ENCODE measurements at regions of chr19 and their contacts with region 1.

Region 1: DNA sequence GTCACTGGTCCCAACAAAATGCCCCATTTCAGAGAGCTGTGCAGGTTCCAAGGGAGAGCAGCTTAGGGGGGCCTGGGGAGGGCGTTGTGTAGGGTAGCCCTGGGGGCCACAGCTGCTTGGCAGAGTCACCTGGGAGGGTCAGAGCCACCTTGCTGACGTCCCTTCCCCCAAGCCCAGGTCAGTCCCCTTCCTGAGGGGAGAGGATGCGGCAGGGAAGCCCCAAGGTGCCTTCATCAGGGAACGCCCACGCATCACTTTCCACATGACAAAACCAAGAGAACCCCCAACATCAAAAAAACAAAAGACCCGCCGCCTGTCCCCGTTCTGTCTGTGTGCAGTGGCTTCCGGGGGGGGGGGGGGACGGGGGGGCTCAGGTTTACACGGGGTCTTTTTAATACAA is 5.3 kb upstream of the UQCR11 start:
- DNase-seq: no peak
- H3K4me3 ChIP-seq: no peak overlapping the region
- H3K27ac ChIP-seq: no peak overlapping the region
- H3K4me1 ChIP-seq: peaks cover 7 to 18% (median 9%) of the 10 kb centered on the region in 4 donors
- H3K27me3 ChIP-seq: no peaks in the 10 kb centered on the region
- CTCF ChIP-seq: no peak
- EP300 ChIP-seq: no peak
- POLR2A ChIP-seq: no peak

Region 2: DNA sequence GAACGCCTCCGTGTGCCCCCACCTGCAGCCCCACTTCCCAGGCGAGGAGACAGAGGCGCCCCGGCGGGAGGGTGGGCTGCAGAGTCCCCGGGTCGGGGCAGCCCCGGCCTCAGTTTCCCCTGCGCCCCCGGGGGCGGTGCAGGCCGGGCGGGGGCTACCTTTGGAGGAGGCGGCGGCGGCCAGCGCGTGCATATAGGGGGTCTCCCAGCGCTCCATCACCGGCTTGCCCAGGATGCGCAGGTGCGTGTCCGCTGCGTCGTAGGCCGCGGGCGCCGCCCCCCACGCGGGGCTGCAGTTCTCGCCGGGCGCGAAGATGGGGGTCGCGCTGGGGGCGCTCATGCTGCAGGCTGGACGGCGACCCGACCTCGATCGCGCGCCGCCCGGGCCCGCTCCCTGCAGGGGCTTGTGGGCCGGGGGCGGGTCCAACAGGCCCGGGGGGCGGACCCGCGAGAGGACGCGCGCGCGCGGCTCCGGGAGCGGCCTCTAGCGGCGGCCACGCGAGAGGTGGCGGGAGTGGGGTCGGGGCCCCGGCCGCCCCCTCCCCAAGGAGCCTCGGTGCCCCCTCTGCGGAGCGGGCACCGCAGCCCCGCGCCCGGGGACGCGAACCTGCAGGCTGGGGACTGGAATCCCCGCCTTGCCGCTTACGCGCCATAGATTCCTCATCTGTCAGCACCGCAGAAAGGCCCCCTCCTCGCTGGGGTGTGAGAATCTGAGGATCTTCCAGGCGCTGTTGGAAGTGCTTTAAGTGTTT is 209.3 kb before region 1 on chr19 and contains the start of gene GAMT:
- intact Hi-C with region 1: no loop called
- DNase-seq: peak in 1 of 2 donors; percentile 84
- H3K4me3 ChIP-seq: peak within 1 kb of the TSS; percentile 60 to 88 (median 64)
- H3K27ac ChIP-seq: peak within 1 kb of the TSS in 4 of 5 donors; percentile 53 to 61 (median 57)
- H3K4me1 ChIP-seq: peaks cover 26 to 56% (median 53%) of the 10 kb centered on the region in 4 donors
- H3K27me3 ChIP-seq: peaks cover 0 to 20% (median 0%) of the 10 kb centered on the region in 3 donors
- CTCF ChIP-seq: peak in 5 of 7 experiments; percentile 3 to 60 (median 32)
- EP300 ChIP-seq: no peak
- POLR2A ChIP-seq: no peak
- total RNA-seq, gene GAMT: 2.6 to 15.6 (median 4.5) TPM in 3 of 5 donors, not detected in the others

Region 3: DNA sequence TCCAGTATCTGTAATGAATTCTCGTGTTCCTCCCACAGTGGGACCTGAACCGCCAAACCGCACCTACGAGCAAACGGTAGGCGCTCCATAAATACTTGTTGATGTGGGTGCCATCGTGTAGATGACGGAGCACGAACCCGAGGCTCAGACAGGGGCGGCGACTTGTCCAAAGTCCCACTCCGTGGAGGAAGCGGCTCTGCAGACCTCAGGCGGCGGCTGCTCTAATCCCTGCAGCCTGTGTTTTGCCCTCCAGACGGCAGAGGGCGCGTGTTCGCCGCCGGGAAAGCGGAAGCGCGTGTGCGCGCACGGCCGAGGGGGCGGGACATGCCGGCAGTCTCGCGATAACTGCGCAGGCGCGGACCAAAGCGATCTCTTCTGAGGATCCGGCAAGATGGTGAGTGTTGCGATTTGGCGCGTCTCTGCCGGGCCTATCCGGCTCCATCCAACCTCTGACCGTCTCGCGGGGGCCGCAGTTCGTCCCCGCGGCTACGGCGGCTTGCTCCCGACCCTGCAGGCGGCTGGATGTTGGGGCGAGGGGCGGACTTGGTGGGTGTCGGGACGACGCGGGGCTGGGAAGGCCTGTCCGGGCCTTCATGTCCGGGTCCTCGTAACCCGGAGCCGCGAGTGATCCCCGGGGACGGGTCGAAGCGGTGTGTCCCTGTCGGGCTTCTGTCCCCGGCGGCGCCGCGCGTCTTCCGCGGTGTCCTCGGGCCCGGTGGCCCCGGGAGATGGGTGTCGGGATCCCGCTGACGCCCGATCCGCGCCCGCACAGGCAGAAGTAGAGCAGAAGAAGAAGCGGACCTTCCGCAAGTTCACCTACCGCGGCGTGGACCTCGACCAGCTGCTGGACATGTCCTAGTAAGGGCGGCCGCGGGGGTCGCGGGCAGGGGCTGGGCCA is 172.3 kb before region 1 on chr19 and contains the start of gene RPS15:
- intact Hi-C with region 1: no loop called
- DNase-seq: peak; percentile 96 to 99
- H3K4me3 ChIP-seq: peak within 1 kb of the TSS; percentile 84 to 95 (median 87)
- H3K27ac ChIP-seq: peak within 1 kb of the TSS; percentile 86 to 92 (median 90)
- H3K4me1 ChIP-seq: peaks cover 18 to 37% (median 25%) of the 10 kb centered on the region in 4 donors
- H3K27me3 ChIP-seq: no peaks in the 10 kb centered on the region
- CTCF ChIP-seq: peak in 5 of 7 experiments; percentile 82 to 96 (median 93)
- EP300 ChIP-seq: no peak
- POLR2A ChIP-seq: peak in 2 of 4 donors; percentile 58 to 82
- total RNA-seq, gene RPS15: 428 to 2,471 (median 1,694) TPM

Region 4: DNA sequence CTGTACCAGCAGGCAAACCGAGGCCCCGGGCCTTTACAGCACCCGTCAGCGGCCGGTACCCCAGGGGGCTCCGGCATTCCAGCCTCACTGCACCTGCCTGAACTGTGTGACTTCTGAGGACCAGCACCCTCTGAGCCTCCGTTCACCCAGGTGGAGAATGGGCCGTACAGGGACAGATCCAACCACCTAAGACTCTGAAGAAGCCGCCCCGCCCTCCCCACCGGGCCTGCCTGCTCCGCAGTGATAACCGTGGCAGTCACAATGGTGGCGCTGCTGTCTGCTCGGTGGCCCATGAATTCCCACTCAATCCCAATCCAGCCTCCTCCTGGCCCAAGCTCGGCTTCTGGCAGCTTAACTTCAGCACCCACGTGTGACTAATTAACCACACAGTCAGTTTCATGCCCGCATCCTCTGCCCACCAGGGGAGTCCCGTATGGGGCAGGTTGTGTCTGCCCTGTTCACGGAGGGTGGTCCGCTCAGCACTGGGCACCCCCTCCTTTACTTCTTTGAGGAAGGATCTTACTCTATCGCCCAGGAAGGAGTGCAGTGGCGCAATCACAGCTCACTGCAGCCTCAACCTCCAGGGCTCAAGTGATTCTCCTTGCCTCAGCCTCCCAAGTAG is 38.5 kb after region 1 on chr19:
- intact Hi-C with region 1: loop called (anchors 5 kb)
- DNase-seq: no peak
- H3K4me3 ChIP-seq: no peak overlapping the region
- H3K27ac ChIP-seq: peak overlapping the region in 1 of 5 donors; percentile 20
- H3K4me1 ChIP-seq: peaks cover 20 to 35% (median 27%) of the 10 kb centered on the region in 4 donors
- H3K27me3 ChIP-seq: peaks cover 0 to 5% (median 0%) of the 10 kb centered on the region in 3 donors
- CTCF ChIP-seq: no peak
- EP300 ChIP-seq: no peak
- POLR2A ChIP-seq: no peak

Measured in stomach (tissue), 19 donors.